ENCODE measurements at regions of chr11 and their contacts with region 1.

Region 1: DNA sequence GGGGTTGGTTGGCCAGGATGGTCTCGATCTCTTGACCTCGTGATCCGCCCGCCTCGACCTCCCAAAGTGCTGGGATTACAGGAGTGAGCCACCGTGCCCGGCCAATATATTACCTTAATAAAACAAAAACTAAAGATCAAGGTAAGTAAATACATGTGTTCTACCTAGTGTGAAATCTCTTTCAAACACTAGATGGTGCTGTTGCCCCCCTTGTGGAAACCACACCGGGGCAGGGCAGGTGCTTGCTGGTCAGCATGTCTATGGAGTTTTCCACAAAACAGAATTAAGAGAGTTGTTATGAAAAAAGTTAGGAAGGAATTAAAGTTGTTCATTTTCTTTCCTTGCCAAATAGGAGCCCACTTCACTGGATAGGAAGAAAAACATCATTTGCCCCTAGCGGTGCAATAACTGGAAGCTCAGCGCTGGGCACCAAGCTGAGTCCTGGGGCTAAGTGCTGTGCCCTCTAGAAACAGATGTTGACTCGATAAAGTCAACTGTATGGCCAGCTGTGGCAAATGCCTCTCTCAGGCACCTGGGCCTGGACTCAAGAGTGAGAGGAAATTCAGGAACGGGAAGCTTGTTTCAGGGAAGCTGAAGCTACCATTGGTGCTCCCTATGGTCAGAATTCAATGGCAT is 6.3 kb upstream of the KCNJ5 start:
- DNase-seq: peak; percentile 75
- ATAC-seq: peak; percentile 85
- H3K4me3 Mint-ChIP-seq: no peak overlapping the region
- H3K27ac Mint-ChIP-seq: no peak overlapping the region
- H3K4me1 Mint-ChIP-seq: peaks cover 4% of the 10 kb centered on the region
- H3K27me3 Mint-ChIP-seq: peaks cover 61% of the 10 kb centered on the region

Region 2: DNA sequence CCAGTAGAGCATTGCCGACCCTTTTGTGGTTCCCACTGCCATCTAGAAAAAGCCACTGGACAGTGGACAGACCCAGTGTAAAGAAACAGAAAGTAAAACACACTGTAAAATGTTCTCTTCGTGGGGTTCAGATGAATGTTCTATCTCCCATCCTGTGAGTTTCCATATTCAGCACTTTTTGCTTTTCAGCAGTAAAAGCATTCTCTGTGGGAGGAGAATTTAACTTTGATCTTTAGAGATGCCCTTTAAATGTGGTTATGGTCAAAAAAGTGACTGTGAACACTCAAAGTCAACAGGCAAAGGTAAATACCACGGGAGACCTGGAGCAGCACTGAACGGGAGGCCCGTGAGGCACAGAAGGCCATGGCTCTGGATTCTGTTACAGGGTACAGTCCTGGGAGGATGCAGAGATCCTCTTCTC is 137.1 kb before region 1 on chr11:
- CTCF ChIA-PET with region 1: no interaction called
- POLR2A ChIA-PET with region 1: no interaction called
- DNase-seq: no peak
- ATAC-seq: peak; percentile 63
- H3K4me3 Mint-ChIP-seq: peak overlapping the region; percentile 37
- H3K27ac Mint-ChIP-seq: peak overlapping the region; percentile 18
- H3K4me1 Mint-ChIP-seq: peaks cover 58% of the 10 kb centered on the region
- H3K27me3 Mint-ChIP-seq: no peaks in the 10 kb centered on the region

Region 3: DNA sequence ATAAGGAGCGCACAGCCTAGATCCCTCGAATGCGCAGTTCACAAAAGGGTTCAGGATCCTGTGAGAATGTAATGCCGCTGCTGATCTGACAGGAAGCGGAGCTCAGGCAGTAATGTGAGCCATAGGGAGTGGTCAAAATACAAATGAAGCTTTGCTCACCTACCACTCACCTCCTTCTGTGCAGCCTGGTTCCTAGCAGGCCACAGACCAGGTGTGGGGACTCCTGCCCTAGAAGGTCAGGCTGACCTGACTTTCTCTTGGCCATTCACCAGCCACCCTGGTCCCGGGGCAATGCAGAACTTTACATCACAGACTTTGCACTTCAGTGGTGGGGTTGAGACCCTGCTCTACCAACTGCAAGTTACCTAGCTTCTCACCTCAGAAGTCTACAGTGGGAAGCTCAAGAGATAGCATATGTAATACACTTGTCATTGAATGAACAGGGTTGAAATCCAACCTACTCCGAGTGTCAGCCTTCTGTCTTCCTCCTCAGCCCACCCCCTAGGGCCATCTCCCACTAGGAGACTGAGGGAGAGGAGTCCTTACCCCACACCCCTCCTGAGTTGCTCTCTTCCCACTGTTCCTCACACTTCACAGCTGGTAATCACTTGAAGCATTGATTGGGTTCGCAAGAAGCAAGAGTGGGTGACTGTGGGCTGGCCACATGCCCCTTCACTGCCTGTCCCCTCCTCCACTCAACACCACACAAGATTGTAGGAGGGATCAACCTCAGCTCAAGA is 15.8 kb before region 1 on chr11:
- CTCF ChIA-PET with region 1: interaction called, 16 read pairs
- POLR2A ChIA-PET with region 1: no interaction called
- DNase-seq: peak; percentile 62
- ATAC-seq: peak; percentile 69
- H3K4me3 Mint-ChIP-seq: no peak overlapping the region
- H3K27ac Mint-ChIP-seq: no peak overlapping the region
- H3K4me1 Mint-ChIP-seq: peaks cover 5% of the 10 kb centered on the region
- H3K27me3 Mint-ChIP-seq: peaks cover 10% of the 10 kb centered on the region

Region 4: GRCh38 chr11:128905345-128906184 is 20.7 kb after region 1 on chr11:
- CTCF ChIA-PET with region 1: interaction called, 42 read pairs
- POLR2A ChIA-PET with region 1: no interaction called
- DNase-seq: peak; percentile 52
- ATAC-seq: peak; percentile 76
- H3K4me3 Mint-ChIP-seq: peak overlapping the region; percentile 70
- H3K27ac Mint-ChIP-seq: no peak overlapping the region
- H3K4me1 Mint-ChIP-seq: peaks cover 15% of the 10 kb centered on the region
- H3K27me3 Mint-ChIP-seq: peaks cover 53% of the 10 kb centered on the region

Region 5: GRCh38 chr11:128956401-128957201 is 71.8 kb after region 1 on chr11:
- CTCF ChIA-PET with region 1: interaction called, 207 read pairs
- POLR2A ChIA-PET with region 1: no interaction called
- DNase-seq: peak; percentile 45
- ATAC-seq: peak; percentile 44
- H3K4me3 Mint-ChIP-seq: no peak overlapping the region
- H3K27ac Mint-ChIP-seq: no peak overlapping the region
- H3K4me1 Mint-ChIP-seq: no peaks in the 10 kb centered on the region
- H3K27me3 Mint-ChIP-seq: peaks cover 20% of the 10 kb centered on the region

Region 6: GRCh38 chr11:129109701-129110100 is 224.9 kb after region 1 on chr11:
- CTCF ChIA-PET with region 1: no interaction called
- POLR2A ChIA-PET with region 1: no interaction called
- DNase-seq: no peak
- ATAC-seq: no peak
- H3K4me3 Mint-ChIP-seq: no peak overlapping the region
- H3K27ac Mint-ChIP-seq: no peak overlapping the region
- H3K4me1 Mint-ChIP-seq: no peaks in the 10 kb centered on the region
- H3K27me3 Mint-ChIP-seq: no peaks in the 10 kb centered on the region

Region 7: GRCh38 chr11:129331871-129332274 is 447.1 kb after region 1 on chr11:
- CTCF ChIA-PET with region 1: interaction called, 11 read pairs
- POLR2A ChIA-PET with region 1: no interaction called
- DNase-seq: peak; percentile 74
- ATAC-seq: peak; percentile 87
- H3K4me3 Mint-ChIP-seq: no peak overlapping the region
- H3K27ac Mint-ChIP-seq: no peak overlapping the region
- H3K4me1 Mint-ChIP-seq: no peaks in the 10 kb centered on the region
- H3K27me3 Mint-ChIP-seq: peaks cover 2% of the 10 kb centered on the region